ENCODE measurements at regions of chr3 and their contacts with region 1.

Region 1: GRCh38 chr3:175046601-175047000 is 187.5 kb downstream of the NAALADL2 start:
- DNase-seq: no peak
- H3K4me3 ChIP-seq: no peak overlapping the region
- H3K27ac ChIP-seq: no peak overlapping the region
- H3K4me1 ChIP-seq: no peaks in the 10 kb centered on the region
- H3K27me3 ChIP-seq: no peaks in the 10 kb centered on the region
- CTCF ChIP-seq: no peak
- POLR2A ChIP-seq: no peak

Region 2: GRCh38 chr3:175065497-175065896 is 18.9 kb after region 1 on chr3:
- intact Hi-C with region 1: no loop called
- DNase-seq: no peak
- H3K4me3 ChIP-seq: no peak overlapping the region
- H3K27ac ChIP-seq: no peak overlapping the region
- H3K4me1 ChIP-seq: no peaks in the 10 kb centered on the region
- H3K27me3 ChIP-seq: no peaks in the 10 kb centered on the region
- CTCF ChIP-seq: no peak
- POLR2A ChIP-seq: no peak

Region 3: GRCh38 chr3:175184392-175184791 is 137.8 kb after region 1 on chr3:
- intact Hi-C with region 1: loop called (anchors 5 kb)
- DNase-seq: no peak
- H3K4me3 ChIP-seq: no peak overlapping the region
- H3K27ac ChIP-seq: no peak overlapping the region
- H3K4me1 ChIP-seq: no peaks in the 10 kb centered on the region
- H3K27me3 ChIP-seq: no peaks in the 10 kb centered on the region
- CTCF ChIP-seq: no peak
- POLR2A ChIP-seq: no peak